H1 (cell line): ENCODE measurements at regions of chr6 and their contacts with region 1.

Region 1: GRCh38 chr6:39812853-39813533 is 20.8 kb downstream of the DAAM2 start:
- DNase-seq: no peak
- H3K4me3 ChIP-seq: no peak overlapping the region
- H3K27ac ChIP-seq: no peak overlapping the region
- H3K4me1 ChIP-seq: peaks cover 0 to 12% (median 3%) of the 10 kb centered on the region in 4 experiments; a peak in 2 of 7 replicates
- H3K27me3 ChIP-seq: no peaks in the 10 kb centered on the region
- CTCF ChIP-seq: peak in 1 of 3 experiments; percentile 9; a peak in 1 of 4 replicates
- EP300 ChIP-seq: peak in 1 of 2 experiments; percentile 39; a peak in 1 of 3 replicates
- POLR2A ChIP-seq: no peak
- RAD21 ChIP-seq: peak; percentile 37 to 44

Region 2: GRCh38 chr6:39824030-39824926 is 11.3 kb after region 1 on chr6:
- CTCF ChIA-PET with region 1: interaction called, 16 read pairs
- POLR2A ChIA-PET with region 1: no interaction called
- DNase-seq: no peak
- H3K4me3 ChIP-seq: no peak overlapping the region
- H3K27ac ChIP-seq: no peak overlapping the region
- H3K4me1 ChIP-seq: peaks cover 0 to 10% (median 6%) of the 10 kb centered on the region in 4 experiments; a peak in 4 of 7 replicates
- H3K27me3 ChIP-seq: peaks cover 0 to 2% (median 0%) of the 10 kb centered on the region in 4 experiments; a peak in 1 of 7 replicates
- CTCF ChIP-seq: no peak
- EP300 ChIP-seq: no peak
- POLR2A ChIP-seq: no peak
- RAD21 ChIP-seq: peak; percentile 4 to 23; a peak in 2 of 4 replicates